Colonic mucosa (tissue), 4 donors: ENCODE measurements at regions of chr20 and their contacts with region 1.

Region 1: DNA sequence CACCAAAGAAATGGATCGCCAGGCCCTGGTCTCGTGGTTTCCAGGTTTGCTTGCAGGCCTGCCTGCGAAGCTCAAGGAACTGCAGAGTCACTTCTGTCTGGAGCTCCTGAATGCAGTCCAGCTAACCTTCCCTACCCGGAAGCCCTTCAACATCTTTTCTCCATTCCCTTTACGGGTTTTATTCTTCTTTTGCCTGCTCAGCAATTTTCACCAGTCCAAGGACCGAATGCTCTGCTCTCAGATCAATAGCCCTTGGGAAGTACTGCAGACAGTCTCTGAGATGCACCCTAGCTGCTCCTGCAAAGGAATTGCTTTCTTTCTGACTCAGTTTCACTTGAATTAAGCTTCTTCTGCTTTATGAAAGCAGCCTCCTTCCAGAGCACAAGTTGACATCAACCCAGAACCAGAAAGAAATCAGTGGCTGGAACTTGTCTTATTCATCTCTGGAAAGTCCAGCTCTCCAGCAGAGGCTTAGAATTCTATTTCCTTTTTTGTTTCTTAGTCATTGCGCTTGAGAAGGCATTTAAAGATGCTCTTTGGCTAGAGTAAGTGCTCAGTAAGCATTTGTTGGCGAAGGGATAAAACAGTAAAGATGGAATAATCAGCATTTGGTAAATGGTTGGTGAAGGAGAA is 18.7 kb upstream of the YWHAB start:
- DNase-seq: no peak
- H3K4me3 ChIP-seq: no peak overlapping the region
- H3K27ac ChIP-seq: no peak overlapping the region
- H3K4me1 ChIP-seq: peaks cover 3% of the 10 kb centered on the region
- H3K27me3 ChIP-seq: no peaks in the 10 kb centered on the region
- CTCF ChIP-seq: no peak

Region 2: GRCh38 chr20:44532259-44532980 is 334.4 kb before region 1 on chr20:
- intact Hi-C with region 1: no loop called
- DNase-seq: no peak
- H3K4me3 ChIP-seq: peak overlapping the region; percentile 80
- H3K27ac ChIP-seq: peak overlapping the region; percentile 29
- H3K4me1 ChIP-seq: peaks cover 6% of the 10 kb centered on the region
- H3K27me3 ChIP-seq: no peaks in the 10 kb centered on the region
- CTCF ChIP-seq: no peak

Region 3: DNA sequence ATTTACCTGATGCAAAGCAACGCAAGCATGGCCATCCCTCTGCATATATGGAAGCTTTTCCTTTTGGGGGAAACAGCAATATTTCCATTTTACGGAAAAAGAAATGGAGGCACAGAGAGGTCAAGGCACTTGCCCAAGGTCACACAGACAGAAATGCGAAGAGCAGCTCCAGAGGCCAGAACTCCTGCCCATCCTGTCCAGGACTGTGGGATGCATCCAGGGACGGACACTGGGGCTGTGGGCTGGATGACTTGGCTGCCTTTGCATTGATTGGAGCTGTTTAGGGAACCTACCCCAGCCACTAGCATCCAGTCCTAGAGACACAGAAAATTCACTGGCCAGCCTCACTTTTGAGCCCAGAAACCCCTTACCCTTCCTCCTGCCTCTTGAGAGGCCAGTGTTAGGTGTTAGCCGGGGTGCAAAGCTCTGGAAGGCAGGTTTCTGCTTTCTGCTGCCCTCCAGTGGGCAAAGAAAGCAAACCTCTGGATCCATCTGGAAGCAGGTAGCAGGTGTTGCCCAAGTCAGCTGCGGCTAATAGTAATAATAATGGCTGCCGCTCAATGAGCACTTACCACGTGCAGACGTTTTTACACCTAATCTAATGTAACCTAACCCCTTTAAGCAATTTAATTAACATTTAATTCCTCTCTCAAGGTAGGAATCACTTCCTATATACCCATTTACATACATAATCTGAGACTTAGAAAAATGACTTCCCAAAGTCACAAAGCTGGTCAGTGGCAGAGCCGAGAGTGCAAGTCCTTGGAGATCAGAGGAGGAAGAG is 183.4 kb before region 1 on chr20:
- intact Hi-C with region 1: loop called (anchors 5 kb)
- DNase-seq: peak; percentile 56
- H3K4me3 ChIP-seq: no peak overlapping the region
- H3K27ac ChIP-seq: no peak overlapping the region
- H3K4me1 ChIP-seq: no peaks in the 10 kb centered on the region
- H3K27me3 ChIP-seq: no peaks in the 10 kb centered on the region
- CTCF ChIP-seq: peak; percentile 56

Region 4: GRCh38 chr20:44747166-44748004 is 119.4 kb before region 1 on chr20:
- intact Hi-C with region 1: loop called (anchors 5 kb)
- DNase-seq: peak; percentile 84
- H3K4me3 ChIP-seq: no peak overlapping the region
- H3K27ac ChIP-seq: no peak overlapping the region
- H3K4me1 ChIP-seq: no peaks in the 10 kb centered on the region
- H3K27me3 ChIP-seq: peaks cover 16% of the 10 kb centered on the region
- CTCF ChIP-seq: peak; percentile 39

Region 5: DNA sequence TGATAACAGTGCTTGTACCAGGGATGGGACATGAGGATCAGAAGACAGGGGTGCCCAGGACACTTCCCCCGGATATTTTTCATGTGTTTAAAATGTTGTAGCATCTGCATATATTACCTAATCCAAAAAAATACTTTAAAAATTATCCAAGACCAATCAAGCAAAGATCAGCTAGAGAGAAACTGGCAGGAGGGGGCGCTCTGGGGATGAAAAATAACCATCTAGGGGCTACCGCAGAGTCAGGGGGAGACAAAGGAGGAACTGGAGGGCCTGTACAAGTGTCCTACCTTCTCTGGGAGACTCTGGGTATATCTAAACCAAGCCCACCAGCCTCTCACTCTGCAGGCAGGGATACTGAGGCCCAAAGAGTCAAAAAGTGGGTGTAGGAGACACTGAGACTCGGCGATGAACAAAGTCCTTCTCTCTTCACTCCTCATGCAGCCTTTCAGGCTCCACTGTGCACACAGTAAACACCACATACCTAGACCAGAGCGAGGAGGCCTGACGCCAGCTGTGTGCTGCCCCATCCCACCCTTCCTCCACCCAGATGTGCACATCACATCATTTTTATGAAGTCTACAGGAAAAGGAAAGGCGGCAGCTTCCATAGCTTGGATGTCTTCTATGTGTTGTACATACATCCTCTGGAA is 66.3 kb before region 1 on chr20:
- intact Hi-C with region 1: loop called (anchors 2 kb)
- DNase-seq: no peak
- H3K4me3 ChIP-seq: no peak overlapping the region
- H3K27ac ChIP-seq: no peak overlapping the region
- H3K4me1 ChIP-seq: no peaks in the 10 kb centered on the region
- H3K27me3 ChIP-seq: no peaks in the 10 kb centered on the region
- CTCF ChIP-seq: no peak